Activated T-helper 2 cell treated with anti-CD3 and anti-CD28 coated beads, Interferon-gamma antibody, Interleukin-2, Interleukin-4, amounts not matched to agents 10 μg/mL and 5 μg/mL and 100 μg/mL, durations not matched to agents 14 hours and 24 hours and 36 hours (primary cell): ENCODE measurements at regions of chr10 and their contacts with region 1.

Region 1: DNA sequence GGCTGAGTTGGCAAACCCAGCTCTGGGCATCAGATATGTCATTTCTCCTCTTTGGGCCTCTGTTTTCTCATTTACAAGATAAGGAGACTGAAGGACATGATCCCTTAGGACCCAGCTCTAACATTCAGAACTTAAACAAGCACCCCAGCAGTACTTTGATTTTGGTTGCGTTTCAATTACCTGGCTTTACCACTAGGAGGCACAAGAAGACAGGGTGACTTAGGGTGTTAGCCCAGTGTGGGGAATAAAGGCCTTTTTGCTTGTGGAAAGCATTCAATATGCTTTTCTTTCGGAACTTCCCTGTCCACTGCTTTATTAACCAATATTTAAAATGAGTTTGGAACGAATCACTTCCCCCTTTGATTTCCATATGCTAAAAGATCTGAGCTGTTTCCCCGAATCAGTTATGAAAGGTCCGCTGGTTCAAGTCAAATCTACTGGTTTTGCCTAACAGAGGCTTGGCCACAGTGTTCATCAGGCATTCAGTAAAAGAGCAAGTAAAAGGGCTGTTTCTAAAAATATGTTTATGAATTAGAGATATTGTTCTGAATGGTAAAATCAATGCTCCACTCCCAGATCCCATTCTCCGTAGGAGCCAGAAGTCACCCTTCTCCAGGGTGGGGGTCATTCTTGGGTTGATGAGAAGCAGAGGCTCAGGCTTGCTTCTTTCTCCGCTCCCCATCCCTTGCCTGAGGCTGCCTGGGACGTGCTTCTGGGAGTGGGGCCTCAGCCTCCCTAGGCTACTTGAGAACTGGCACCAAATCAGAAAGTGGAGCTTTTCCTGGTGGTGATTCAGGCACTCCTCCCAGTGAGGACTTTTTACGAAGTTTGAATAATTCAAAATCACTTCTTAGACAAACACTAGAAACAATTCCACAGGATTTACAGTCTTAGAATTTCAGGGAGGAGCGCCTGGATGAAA is 105.5 kb downstream of the MYOF start:
- DNase-seq: peak; percentile 32
- H3K4me3 Mint-ChIP-seq: no peak overlapping the region
- H3K27ac Mint-ChIP-seq: peak overlapping the region; percentile 44
- H3K4me1 Mint-ChIP-seq: peaks cover 32% of the 10 kb centered on the region
- H3K27me3 Mint-ChIP-seq: no peaks in the 10 kb centered on the region

Region 2: GRCh38 chr10:93413252-93413689 is 36.6 kb after region 1 on chr10:
- intact Hi-C with region 1: loop called (anchors 5 kb)
- DNase-seq: peak; percentile 32
- H3K4me3 Mint-ChIP-seq: no peak overlapping the region
- H3K27ac Mint-ChIP-seq: peak overlapping the region; percentile 71
- H3K4me1 Mint-ChIP-seq: peaks cover 40% of the 10 kb centered on the region
- H3K27me3 Mint-ChIP-seq: no peaks in the 10 kb centered on the region

Region 3: DNA sequence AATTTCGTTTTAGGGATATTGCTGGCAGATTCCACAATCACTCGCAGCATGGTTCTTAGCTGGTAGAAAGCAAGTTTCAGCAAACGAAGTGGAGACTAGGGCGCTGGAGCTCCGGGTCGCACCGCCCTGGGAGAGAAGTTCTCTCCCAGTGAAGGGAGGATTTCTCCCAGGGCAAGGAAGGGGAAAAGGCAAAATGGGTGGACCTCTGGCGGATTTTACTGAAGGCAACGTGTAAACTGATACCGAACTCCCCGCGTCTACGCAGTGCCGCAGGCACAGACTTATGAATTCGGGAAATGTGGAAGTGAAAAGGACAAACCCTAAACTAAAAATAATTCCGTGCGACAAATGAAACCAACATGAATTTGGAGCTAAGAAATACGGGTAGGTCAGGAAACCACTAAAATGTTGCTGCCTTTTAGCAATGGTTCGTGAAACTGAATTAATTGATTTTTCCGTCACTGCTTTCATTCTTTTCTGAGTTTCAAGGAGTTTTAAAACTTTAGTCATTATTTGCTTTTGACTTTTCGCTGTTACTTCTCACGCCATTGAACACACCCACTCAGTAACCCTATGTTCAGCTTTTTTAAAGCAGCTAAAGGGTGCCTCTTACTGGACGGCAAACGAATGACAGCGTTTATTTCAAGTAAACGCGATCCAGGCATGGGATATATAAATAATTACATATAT is 105.7 kb after region 1 on chr10 and contains the start of gene MYOF:
- intact Hi-C with region 1: loop called (anchors 1 kb)
- DNase-seq: peak; percentile 37
- H3K4me3 Mint-ChIP-seq: peak within 1 kb of the TSS; percentile 91
- H3K27ac Mint-ChIP-seq: peak within 1 kb of the TSS; percentile 93
- H3K4me1 Mint-ChIP-seq: peaks cover 27% of the 10 kb centered on the region
- H3K27me3 Mint-ChIP-seq: no peaks in the 10 kb centered on the region
- total RNA-seq, gene MYOF: 32.5 and 33.2 TPM in 2 replicates

Region 4: DNA sequence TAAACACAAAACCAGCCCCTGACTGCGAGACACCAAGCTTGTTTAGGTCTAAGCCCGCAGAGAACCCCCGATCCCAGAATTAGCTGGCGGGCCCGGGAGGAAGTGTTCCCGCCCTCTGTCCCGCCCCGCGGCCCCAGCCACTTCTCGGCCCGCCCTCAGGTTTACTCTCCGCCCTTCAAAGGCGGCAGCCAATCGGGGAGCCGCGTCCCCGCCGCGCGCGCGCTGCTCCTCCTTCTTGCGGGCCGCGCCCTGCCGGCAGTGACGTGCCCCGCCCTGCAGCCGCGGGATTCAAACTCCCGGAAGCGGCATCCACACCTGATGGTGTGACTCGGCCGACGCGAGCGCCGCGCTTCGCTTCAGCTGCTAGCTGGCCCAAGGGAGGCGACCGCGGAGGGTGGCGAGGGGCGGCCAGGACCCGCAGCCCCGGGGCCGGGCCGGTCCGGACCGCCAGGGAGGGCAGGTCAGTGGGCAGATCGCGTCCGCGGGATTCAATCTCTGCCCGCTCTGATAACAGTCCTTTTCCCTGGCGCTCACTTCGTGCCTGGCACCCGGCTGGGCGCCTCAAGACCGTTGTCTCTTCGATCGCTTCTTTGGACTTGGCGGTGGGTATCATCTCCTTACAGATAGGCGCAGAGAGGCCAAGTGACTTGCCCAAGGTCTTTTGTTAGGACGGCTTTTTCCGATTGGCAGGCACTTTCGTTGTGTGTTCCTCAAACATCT is 119.8 kb after region 1 on chr10 and contains the start of gene CEP55:
- intact Hi-C with region 1: loop called (anchors 1 kb)
- DNase-seq: peak; percentile 95
- H3K4me3 Mint-ChIP-seq: peak within 1 kb of the TSS; percentile 97
- H3K27ac Mint-ChIP-seq: peak within 1 kb of the TSS; percentile 96
- H3K4me1 Mint-ChIP-seq: peaks cover 54% of the 10 kb centered on the region
- H3K27me3 Mint-ChIP-seq: no peaks in the 10 kb centered on the region
- total RNA-seq, gene CEP55: 72.6 and 76.1 TPM in 2 replicates

Region 5: GRCh38 chr10:93503075-93503474 is 126.4 kb after region 1 on chr10:
- intact Hi-C with region 1: loop called (anchors 1 kb)
- DNase-seq: no peak
- H3K4me3 Mint-ChIP-seq: peak overlapping the region; percentile 66
- H3K27ac Mint-ChIP-seq: peak overlapping the region; percentile 87
- H3K4me1 Mint-ChIP-seq: peaks cover 74% of the 10 kb centered on the region
- H3K27me3 Mint-ChIP-seq: no peaks in the 10 kb centered on the region

Region 6: GRCh38 chr10:93515071-93516005 is 138.7 kb after region 1 on chr10:
- intact Hi-C with region 1: loop called (anchors 1 kb)
- DNase-seq: no peak
- H3K4me3 Mint-ChIP-seq: no peak overlapping the region
- H3K27ac Mint-ChIP-seq: no peak overlapping the region
- H3K4me1 Mint-ChIP-seq: peaks cover 8% of the 10 kb centered on the region
- H3K27me3 Mint-ChIP-seq: no peaks in the 10 kb centered on the region